ENCODE measurements at regions of chr6 and their contacts with region 1.

Region 1: GRCh38 chr6:170306324-170307079 is at the start of gene FAM120B:
- DNase-seq: peak; percentile 97
- H3K4me3 Mint-ChIP-seq: peak within 1 kb of the TSS; percentile 95
- H3K27ac Mint-ChIP-seq: peak within 1 kb of the TSS; percentile 92
- H3K4me1 Mint-ChIP-seq: peaks cover 26% of the 10 kb centered on the region
- H3K27me3 Mint-ChIP-seq: peaks cover 32% of the 10 kb centered on the region
- total RNA-seq, gene FAM120B: 18.4 TPM in 2 replicates

Region 2: GRCh38 chr6:169701954-169702839 is 604.3 kb before region 1 on chr6 and contains the starts of genes C6orf120 and WDR27:
- intact Hi-C with region 1: loop called (anchors 1 kb)
- DNase-seq: peak; percentile 96
- H3K4me3 Mint-ChIP-seq: peak within 1 kb of the TSS; percentile 91
- H3K27ac Mint-ChIP-seq: peak within 1 kb of the TSS; percentile 91
- H3K4me1 Mint-ChIP-seq: peaks cover 46% of the 10 kb centered on the region
- H3K27me3 Mint-ChIP-seq: no peaks in the 10 kb centered on the region
- total RNA-seq, gene C6orf120: 22.6 and 25.5 TPM in 2 replicates
- total RNA-seq, gene WDR27: 20.1 and 26.8 TPM in 2 replicates

Region 3: DNA sequence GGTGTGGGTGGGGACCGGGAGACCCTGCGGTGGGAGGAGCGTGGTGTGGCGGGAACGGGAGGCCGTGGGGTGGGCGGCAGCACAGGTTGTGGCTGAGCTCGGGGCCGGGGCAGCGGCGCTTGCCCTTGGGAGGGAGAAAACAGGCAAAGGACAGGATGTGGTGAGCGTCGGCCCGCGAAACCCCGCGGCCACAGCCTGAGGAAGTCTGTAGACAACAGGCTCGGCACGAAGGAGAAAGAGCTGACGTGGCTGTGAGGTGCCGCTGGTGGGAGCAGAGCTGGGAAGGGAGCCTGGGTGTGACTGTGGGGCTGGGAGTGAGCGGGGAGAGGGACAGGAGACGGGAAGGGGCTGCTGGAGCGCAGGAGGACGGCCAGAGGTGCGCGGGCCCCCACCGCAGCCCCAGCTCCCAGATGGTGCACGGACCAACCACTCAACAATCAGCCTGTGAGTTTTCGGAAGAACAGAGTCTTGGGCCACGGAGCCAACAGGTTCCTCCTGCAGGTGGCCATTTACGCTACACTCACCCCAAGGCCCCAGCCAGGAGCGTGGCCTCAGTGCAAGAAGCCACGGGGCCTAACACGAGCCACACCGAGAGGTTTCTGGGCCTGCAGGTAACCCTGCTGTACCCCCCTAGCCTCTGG is 218.4 kb before region 1 on chr6:
- intact Hi-C with region 1: loop called (anchors 5 kb)
- DNase-seq: peak; percentile 55
- H3K4me3 Mint-ChIP-seq: peak overlapping the region; percentile 82
- H3K27ac Mint-ChIP-seq: peak overlapping the region; percentile 98
- H3K4me1 Mint-ChIP-seq: peaks cover 40% of the 10 kb centered on the region
- H3K27me3 Mint-ChIP-seq: peaks cover 2% of the 10 kb centered on the region

Region 4: DNA sequence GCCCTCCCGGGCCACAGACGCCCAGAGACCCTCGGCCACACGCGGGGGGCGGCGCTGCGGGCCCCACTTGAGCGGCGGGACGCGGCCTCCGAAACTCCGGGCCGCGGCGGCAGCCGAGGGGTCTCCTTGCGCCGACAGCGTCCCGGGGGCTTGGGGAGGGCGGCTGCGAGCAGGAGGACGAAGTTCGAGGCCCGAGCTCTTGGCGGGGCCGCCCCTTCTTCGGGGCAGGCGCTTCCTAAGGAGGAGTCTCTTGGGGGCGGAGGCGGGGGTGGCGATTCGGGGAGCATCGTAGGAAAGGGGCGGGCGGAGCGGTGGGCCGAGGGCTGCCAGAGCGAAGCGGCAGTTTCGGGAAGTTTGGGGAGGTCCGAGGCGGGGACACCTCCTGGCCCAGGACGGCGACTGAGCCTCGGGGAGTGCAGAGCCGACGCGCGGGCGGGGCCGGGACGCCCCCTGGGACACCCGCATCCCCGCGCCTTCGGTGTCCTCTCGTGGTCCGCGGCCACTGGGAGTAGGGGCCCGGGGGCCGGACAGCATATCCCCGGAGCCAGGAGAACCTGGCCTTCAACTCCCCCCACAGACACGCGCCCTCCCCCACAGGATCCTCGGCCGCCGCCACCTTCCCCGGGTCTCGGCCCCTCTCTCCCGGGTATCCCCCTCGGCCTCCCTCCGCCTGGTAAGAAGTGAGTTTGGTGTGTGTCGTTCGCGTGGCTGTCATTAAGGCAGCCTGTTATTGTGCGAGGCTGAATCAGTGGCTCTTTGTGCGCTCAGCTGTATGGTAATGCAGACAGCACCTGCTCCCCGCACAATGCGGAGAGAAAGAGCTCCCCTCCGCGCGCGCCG is 15.0 kb before region 1 on chr6:
- intact Hi-C with region 1: loop called (anchors 1 kb)
- DNase-seq: no peak
- H3K4me3 Mint-ChIP-seq: peak overlapping the region; percentile 85
- H3K27ac Mint-ChIP-seq: peak overlapping the region; percentile 75
- H3K4me1 Mint-ChIP-seq: peaks cover 50% of the 10 kb centered on the region
- H3K27me3 Mint-ChIP-seq: peaks cover 72% of the 10 kb centered on the region

Region 5: DNA sequence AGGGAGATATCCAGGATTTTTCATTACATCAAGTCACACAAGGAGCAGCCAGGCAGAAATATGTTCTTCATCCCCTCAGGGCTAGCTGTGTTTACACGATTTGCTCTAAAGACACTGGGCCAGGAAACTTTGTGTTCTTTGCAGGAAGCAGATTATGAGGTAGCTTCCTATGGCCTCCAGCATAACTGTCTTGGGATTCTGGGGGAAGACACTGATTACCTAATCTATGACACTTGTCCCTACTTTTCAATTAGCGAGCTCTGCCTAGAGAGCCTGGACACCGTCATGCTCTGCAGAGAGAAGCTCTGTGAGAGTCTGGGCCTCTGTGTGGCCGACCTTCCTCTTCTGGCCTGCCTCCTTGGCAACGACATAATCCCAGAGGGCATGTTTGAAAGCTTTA is 11.2 kb after region 1 on chr6:
- intact Hi-C with region 1: no loop called
- DNase-seq: no peak
- H3K4me3 Mint-ChIP-seq: no peak overlapping the region
- H3K27ac Mint-ChIP-seq: no peak overlapping the region
- H3K4me1 Mint-ChIP-seq: peaks cover 34% of the 10 kb centered on the region
- H3K27me3 Mint-ChIP-seq: no peaks in the 10 kb centered on the region

Region 6: DNA sequence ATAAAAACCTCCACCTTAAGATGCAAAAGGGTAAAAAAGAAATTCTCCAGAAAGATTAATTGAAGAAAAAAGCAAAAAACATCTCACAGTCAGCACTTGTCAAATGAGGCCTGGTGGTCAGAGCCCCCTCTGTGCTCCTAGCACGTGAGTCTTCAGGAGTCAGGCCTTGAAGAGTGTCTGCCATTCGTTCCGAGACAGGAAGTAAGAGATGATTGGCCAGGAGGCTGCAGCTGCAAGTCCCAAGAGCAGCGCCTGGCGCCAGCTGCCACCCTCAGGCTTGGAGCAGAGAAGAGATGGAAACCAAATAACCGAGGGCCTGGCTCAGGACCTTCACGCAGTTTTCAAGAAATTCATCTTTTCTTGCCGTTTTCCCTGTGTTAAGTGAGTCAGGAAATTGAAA is 65.1 kb after region 1 on chr6:
- intact Hi-C with region 1: no loop called
- DNase-seq: no peak
- H3K4me3 Mint-ChIP-seq: no peak overlapping the region
- H3K27ac Mint-ChIP-seq: no peak overlapping the region
- H3K4me1 Mint-ChIP-seq: peaks cover 8% of the 10 kb centered on the region
- H3K27me3 Mint-ChIP-seq: no peaks in the 10 kb centered on the region

Region 7: DNA sequence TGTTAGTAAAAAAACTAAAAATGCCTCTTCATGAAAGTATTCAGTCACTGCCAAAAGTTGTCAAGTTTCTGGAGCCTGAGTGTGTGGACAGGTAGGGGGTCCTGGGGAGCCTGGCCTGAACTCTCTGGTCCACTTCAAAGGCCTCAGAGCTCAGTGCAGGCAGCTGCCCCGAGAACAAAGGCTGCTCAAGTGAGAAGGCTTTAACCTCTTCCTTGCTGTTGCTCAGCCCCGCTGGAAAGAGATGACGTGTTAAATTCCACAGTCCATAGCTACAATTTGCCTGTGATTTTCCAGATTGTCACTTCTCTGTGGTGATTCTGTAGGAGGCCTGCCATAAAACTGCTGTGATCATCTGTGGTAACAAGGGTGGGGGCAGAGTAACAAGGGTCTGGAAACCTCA is 96.9 kb after region 1 on chr6:
- intact Hi-C with region 1: no loop called
- DNase-seq: no peak
- H3K4me3 Mint-ChIP-seq: no peak overlapping the region
- H3K27ac Mint-ChIP-seq: no peak overlapping the region
- H3K4me1 Mint-ChIP-seq: no peaks in the 10 kb centered on the region
- H3K27me3 Mint-ChIP-seq: no peaks in the 10 kb centered on the region

Region 8: DNA sequence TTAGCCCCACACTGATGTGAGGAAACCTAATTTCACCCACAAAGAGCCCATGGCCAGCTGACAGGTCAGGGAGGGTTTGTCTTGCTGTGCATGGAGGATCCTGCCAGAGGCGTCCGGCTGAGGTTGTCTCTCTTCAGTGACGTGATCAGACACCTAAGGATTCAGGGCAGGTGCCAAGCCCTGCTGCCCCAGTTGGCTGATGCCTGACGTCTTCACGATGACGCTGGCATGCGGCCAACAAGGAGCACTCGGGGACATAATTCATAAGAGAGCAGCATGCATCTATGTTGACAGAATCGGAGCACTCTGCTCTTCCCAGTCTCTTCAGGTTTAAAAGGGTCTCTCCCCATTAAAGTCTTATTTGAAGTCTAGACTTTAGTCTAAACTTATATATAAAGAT is 198.8 kb after region 1 on chr6:
- intact Hi-C with region 1: no loop called
- DNase-seq: no peak
- H3K4me3 Mint-ChIP-seq: no peak overlapping the region
- H3K27ac Mint-ChIP-seq: no peak overlapping the region
- H3K4me1 Mint-ChIP-seq: no peaks in the 10 kb centered on the region
- H3K27me3 Mint-ChIP-seq: peaks cover 12% of the 10 kb centered on the region

Region 9: GRCh38 chr6:170516783-170517616 is 210.5 kb after region 1 on chr6:
- intact Hi-C with region 1: loop called (anchors 5 kb)
- DNase-seq: peak; percentile 8
- H3K4me3 Mint-ChIP-seq: peak overlapping the region; percentile 43
- H3K27ac Mint-ChIP-seq: no peak overlapping the region
- H3K4me1 Mint-ChIP-seq: no peaks in the 10 kb centered on the region
- H3K27me3 Mint-ChIP-seq: peaks cover 65% of the 10 kb centered on the region